PC-9 (cell line): ENCODE measurements at regions of chr5 and their contacts with region 1.

Region 1: DNA sequence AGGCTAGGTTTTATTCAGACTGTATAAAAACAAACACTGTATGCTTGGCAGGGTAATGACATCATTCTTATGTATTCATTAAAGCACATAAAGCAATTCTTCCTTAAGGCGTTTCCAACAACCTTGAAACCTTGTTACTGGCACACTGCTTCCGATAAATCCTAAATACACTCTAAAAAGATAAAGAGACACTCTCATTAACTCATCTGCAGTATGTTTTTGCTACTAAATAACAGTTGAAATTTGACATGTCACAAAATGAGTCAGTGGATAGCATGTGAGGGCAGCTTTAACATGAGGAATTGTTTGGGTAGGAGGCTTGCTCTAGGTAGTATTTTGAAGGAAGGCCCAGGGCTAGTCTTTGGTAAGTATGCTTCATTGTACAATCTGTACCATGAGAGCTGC is 13.7 kb downstream of the YIPF5 start:
- DNase-seq: no peak
- H3K4me3 ChIP-seq: no peak overlapping the region
- H3K27ac ChIP-seq: no peak overlapping the region; the same call in 1 of the 2 replicates
- H3K4me1 ChIP-seq: no peaks in the 10 kb centered on the region
- H3K27me3 ChIP-seq: no peaks in the 10 kb centered on the region
- CTCF ChIP-seq: no peak

Region 2: DNA sequence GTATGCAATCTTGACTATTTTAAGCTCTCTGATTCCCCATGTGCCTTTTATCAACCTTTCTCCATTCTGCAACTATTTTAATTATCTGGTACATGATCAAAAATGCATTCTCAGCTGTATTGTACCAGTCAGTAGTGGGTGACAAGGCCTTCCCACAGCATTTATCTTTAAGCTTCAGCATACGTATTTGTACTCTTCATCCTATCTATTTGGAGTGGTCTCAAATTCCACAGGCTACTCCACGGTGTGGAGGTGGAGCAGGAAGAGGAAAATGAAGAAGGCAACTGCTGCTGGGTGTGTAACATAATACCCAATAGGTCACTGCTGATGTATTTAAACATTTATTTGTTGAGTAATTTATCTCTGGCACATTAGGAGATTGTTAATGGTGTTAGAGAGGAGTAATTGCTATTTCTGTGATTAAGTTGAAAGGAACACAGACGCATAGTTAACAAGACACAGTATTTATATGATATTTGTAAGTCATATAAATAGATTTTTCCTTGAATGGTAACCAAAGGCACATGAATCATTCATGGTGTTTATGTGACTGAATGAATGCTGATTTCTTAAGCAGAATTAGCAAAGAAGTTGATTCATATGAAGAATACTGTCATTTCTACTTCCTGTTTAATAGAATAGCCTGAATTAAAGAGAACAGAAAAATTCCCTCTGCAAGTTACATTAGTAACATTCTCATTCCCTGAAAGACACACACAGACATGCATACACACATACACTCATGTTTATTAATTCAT is 599.5 kb before region 1 on chr5:
- CTCF ChIA-PET with region 1: no interaction called
- POLR2A ChIA-PET with region 1: interaction called, 12 read pairs
- intact Hi-C with region 1: no loop called
- DNase-seq: no peak
- H3K4me3 ChIP-seq: no peak overlapping the region
- H3K27ac ChIP-seq: no peak overlapping the region
- H3K4me1 ChIP-seq: peaks cover 14% of the 10 kb centered on the region
- H3K27me3 ChIP-seq: no peaks in the 10 kb centered on the region
- CTCF ChIP-seq: no peak

Region 3: GRCh38 chr5:145246961-145247744 is 1090.4 kb after region 1 on chr5:
- CTCF ChIA-PET with region 1: interaction called, 17 read pairs
- POLR2A ChIA-PET with region 1: no interaction called
- intact Hi-C with region 1: no loop called
- DNase-seq: peak in 1 of 2 experiments; percentile 23
- H3K4me3 ChIP-seq: no peak overlapping the region
- H3K27ac ChIP-seq: no peak overlapping the region
- H3K4me1 ChIP-seq: peaks cover 27% of the 10 kb centered on the region
- H3K27me3 ChIP-seq: no peaks in the 10 kb centered on the region
- CTCF ChIP-seq: no peak